CD4-positive, alpha-beta T cell (primary cell): ENCODE measurements at regions of chr3 and their contacts with region 1.

Region 1: GRCh38 chr3:154933581-154933980 is 146.5 kb upstream of the MME start:
- DNase-seq: no peak
- ATAC-seq: no peak
- H3K4me3 ChIP-seq: no peak overlapping the region
- H3K4me3 Mint-ChIP-seq: no peak overlapping the region
- H3K27ac ChIP-seq: no peak overlapping the region
- H3K27ac Mint-ChIP-seq: no peak overlapping the region
- H3K4me1 ChIP-seq: no peaks in the 10 kb centered on the region
- H3K4me1 Mint-ChIP-seq: no peaks in the 10 kb centered on the region
- H3K27me3 ChIP-seq: no peaks in the 10 kb centered on the region
- H3K27me3 Mint-ChIP-seq: no peaks in the 10 kb centered on the region
- CTCF ChIP-seq: no peak

Region 2: GRCh38 chr3:154919226-154919625 is 14.4 kb before region 1 on chr3:
- CTCF ChIA-PET with region 1: no interaction called
- POLR2A ChIA-PET with region 1: no interaction called
- intact Hi-C with region 1: loop called in 1 of 2 experiments (anchors 2 kb)
- DNase-seq: no peak
- ATAC-seq: no peak
- H3K4me3 ChIP-seq: no peak overlapping the region
- H3K4me3 Mint-ChIP-seq: no peak overlapping the region
- H3K27ac ChIP-seq: no peak overlapping the region
- H3K27ac Mint-ChIP-seq: no peak overlapping the region
- H3K4me1 ChIP-seq: no peaks in the 10 kb centered on the region
- H3K4me1 Mint-ChIP-seq: no peaks in the 10 kb centered on the region
- H3K27me3 ChIP-seq: no peaks in the 10 kb centered on the region
- H3K27me3 Mint-ChIP-seq: no peaks in the 10 kb centered on the region
- CTCF ChIP-seq: no peak